GM12878 (cell line): ENCODE measurements at regions of chr3 and their contacts with region 1.

Region 1: GRCh38 chr3:16489326-16490277 is 23.9 kb downstream of the RFTN1 start:
- DNase-seq: no peak
- ATAC-seq: no peak
- H3K4me3 ChIP-seq: no peak overlapping the region
- H3K27ac ChIP-seq: no peak overlapping the region
- H3K4me1 ChIP-seq: no peaks in the 10 kb centered on the region
- H3K27me3 ChIP-seq: no peaks in the 10 kb centered on the region
- CTCF ChIP-seq: no peak
- EP300 ChIP-seq: no peak
- POLR2A ChIP-seq: no peak
- RAD21 ChIP-seq: no peak

Region 2: GRCh38 chr3:16476641-16477455 is 12.8 kb before region 1 on chr3:
- CTCF ChIA-PET with region 1: interaction called, 29 read pairs
- POLR2A ChIA-PET with region 1: interaction called, 47 read pairs
- RAD21 ChIA-PET with region 1: interaction called, 50 read pairs
- SMC1A ChIA-PET with region 1: interaction called, 295 read pairs
- in situ Hi-C with region 1: no loop called
- intact Hi-C with region 1: no loop called
- DNase-seq: no peak
- ATAC-seq: peak; percentile 28
- H3K4me3 ChIP-seq: no peak overlapping the region
- H3K27ac ChIP-seq: no peak overlapping the region
- H3K4me1 ChIP-seq: peaks cover 12% of the 10 kb centered on the region
- H3K27me3 ChIP-seq: no peaks in the 10 kb centered on the region
- CTCF ChIP-seq: no peak
- EP300 ChIP-seq: no peak
- POLR2A ChIP-seq: no peak
- RAD21 ChIP-seq: no peak